Left cardiac atrium (tissue), 4 donors: ENCODE measurements at regions of chr6 and their contacts with region 1.

Region 1: GRCh38 chr6:43053545-43054205 is at the start of gene CUL7:
- DNase-seq: peak; percentile 97
- ATAC-seq: peak; percentile 97 to 98
- total RNA-seq, gene CUL7: 7.6 to 10.8 TPM

Region 2: GRCh38 chr6:42841844-42842584 is 211.7 kb before region 1 on chr6:
- intact Hi-C with region 1: no loop called
- DNase-seq: no peak
- ATAC-seq: no peak

Region 3: GRCh38 chr6:43016176-43016942 is 37.3 kb before region 1 on chr6:
- intact Hi-C with region 1: loop called in 1 of 2 experiments (anchors 5 kb)
- DNase-seq: no peak
- ATAC-seq: no peak

Region 4: GRCh38 chr6:43181942-43182860 is 128.5 kb after region 1 on chr6 and contains the start of gene CUL9:
- intact Hi-C with region 1: no loop called
- DNase-seq: peak; percentile 93
- ATAC-seq: peak; percentile 97 to 99
- total RNA-seq, gene CUL9: 14.6 to 17.4 TPM